Activated B cell treated with CpG ODN at 0.5 μM for 24 hours (primary cell): ENCODE measurements at regions of chr15 and their contacts with region 1.

Region 1: GRCh38 chr15:81106560-81106959 is 27.5 kb upstream of the CFAP161 start:
- DNase-seq: peak; percentile 19
- ATAC-seq: no peak
- H3K4me3 Mint-ChIP-seq: no peak overlapping the region
- H3K27ac Mint-ChIP-seq: no peak overlapping the region
- H3K4me1 Mint-ChIP-seq: peaks cover 7% of the 10 kb centered on the region
- H3K27me3 Mint-ChIP-seq: peaks cover 21% of the 10 kb centered on the region
- CTCF ChIP-seq: no peak

Region 2: DNA sequence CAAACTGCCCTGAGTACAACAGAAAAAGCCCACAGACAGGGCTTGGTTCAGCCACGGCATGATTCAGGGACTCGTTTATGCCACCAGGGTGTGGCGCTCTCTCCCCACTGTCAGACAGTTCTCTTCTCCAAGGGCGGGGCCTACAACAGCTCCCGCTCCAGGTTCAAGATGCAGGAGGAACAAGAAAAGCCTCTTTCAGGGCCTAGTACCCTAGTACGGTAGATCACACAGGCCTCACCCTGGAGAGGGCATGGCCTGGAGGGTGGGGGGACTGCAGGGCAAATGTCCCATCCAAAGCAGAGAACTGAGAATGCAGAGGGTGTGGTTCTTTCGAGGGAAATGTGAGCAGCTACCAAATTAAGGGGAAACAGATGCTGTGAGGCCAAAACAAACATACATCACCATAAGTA is 128.9 kb before region 1 on chr15:
- CTCF ChIA-PET with region 1: no interaction called
- POLR2A ChIA-PET with region 1: no interaction called
- intact Hi-C with region 1: loop called (anchors 1 kb)
- DNase-seq: peak; percentile 22
- ATAC-seq: peak; percentile 65
- H3K4me3 Mint-ChIP-seq: no peak overlapping the region
- H3K27ac Mint-ChIP-seq: peak overlapping the region; percentile 51
- H3K4me1 Mint-ChIP-seq: peaks cover 29% of the 10 kb centered on the region
- H3K27me3 Mint-ChIP-seq: no peaks in the 10 kb centered on the region
- CTCF ChIP-seq: no peak

Region 3: GRCh38 chr15:81000624-81001151 is 105.9 kb before region 1 on chr15 and contains the start of gene TLNRD1:
- CTCF ChIA-PET with region 1: interaction called, 4 read pairs
- POLR2A ChIA-PET with region 1: no interaction called
- intact Hi-C with region 1: loop called (anchors 2 kb)
- DNase-seq: peak; percentile 80
- ATAC-seq: peak; percentile 65
- H3K4me3 Mint-ChIP-seq: peak within 1 kb of the TSS; percentile 94
- H3K27ac Mint-ChIP-seq: peak within 1 kb of the TSS; percentile 96
- H3K4me1 Mint-ChIP-seq: peaks cover 47% of the 10 kb centered on the region
- H3K27me3 Mint-ChIP-seq: no peaks in the 10 kb centered on the region
- CTCF ChIP-seq: no peak
- total RNA-seq, gene TLNRD1: 25.7 TPM in 2 replicates

Region 4: GRCh38 chr15:81155375-81156218 is 49.0 kb after region 1 on chr15:
- CTCF ChIA-PET with region 1: interaction called, 5 read pairs
- POLR2A ChIA-PET with region 1: no interaction called
- intact Hi-C with region 1: loop called (anchors 1 kb)
- DNase-seq: no peak
- ATAC-seq: peak; percentile 31
- H3K4me3 Mint-ChIP-seq: no peak overlapping the region
- H3K27ac Mint-ChIP-seq: no peak overlapping the region
- H3K4me1 Mint-ChIP-seq: peaks cover 3% of the 10 kb centered on the region
- H3K27me3 Mint-ChIP-seq: peaks cover 4% of the 10 kb centered on the region
- CTCF ChIP-seq: no peak

Region 5: GRCh38 chr15:81317642-81318017 is 211.1 kb after region 1 on chr15:
- CTCF ChIA-PET with region 1: no interaction called
- POLR2A ChIA-PET with region 1: no interaction called
- intact Hi-C with region 1: no loop called
- DNase-seq: no peak
- ATAC-seq: no peak
- H3K4me3 Mint-ChIP-seq: peak overlapping the region; percentile 36
- H3K27ac Mint-ChIP-seq: peak overlapping the region; percentile 82
- H3K4me1 Mint-ChIP-seq: peaks cover 81% of the 10 kb centered on the region
- H3K27me3 Mint-ChIP-seq: no peaks in the 10 kb centered on the region
- CTCF ChIP-seq: no peak

Region 6: DNA sequence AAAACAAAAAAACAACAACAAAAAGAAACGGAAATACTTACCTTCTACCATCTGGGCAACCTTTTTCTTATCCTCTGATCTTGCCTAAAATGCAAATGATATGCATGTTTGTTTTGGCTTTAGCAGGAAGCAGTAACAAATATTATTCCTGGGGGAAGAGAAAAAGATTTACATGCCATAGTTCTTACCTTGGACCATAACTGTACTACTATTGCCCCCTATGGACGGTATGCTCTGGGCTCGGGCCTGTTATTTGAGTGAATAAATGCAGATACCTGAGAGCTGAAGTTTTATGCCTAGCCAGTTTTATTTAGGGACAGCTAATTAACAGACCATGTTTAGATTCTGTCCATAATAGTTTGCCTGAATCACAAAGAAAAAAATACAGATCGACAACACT is 230.0 kb after region 1 on chr15:
- CTCF ChIA-PET with region 1: interaction called, 4 read pairs
- POLR2A ChIA-PET with region 1: no interaction called
- intact Hi-C with region 1: loop called (anchors 1 kb)
- DNase-seq: no peak
- ATAC-seq: peak; percentile 61
- H3K4me3 Mint-ChIP-seq: no peak overlapping the region
- H3K27ac Mint-ChIP-seq: no peak overlapping the region
- H3K4me1 Mint-ChIP-seq: peaks cover 12% of the 10 kb centered on the region
- H3K27me3 Mint-ChIP-seq: no peaks in the 10 kb centered on the region
- CTCF ChIP-seq: no peak

Region 7: DNA sequence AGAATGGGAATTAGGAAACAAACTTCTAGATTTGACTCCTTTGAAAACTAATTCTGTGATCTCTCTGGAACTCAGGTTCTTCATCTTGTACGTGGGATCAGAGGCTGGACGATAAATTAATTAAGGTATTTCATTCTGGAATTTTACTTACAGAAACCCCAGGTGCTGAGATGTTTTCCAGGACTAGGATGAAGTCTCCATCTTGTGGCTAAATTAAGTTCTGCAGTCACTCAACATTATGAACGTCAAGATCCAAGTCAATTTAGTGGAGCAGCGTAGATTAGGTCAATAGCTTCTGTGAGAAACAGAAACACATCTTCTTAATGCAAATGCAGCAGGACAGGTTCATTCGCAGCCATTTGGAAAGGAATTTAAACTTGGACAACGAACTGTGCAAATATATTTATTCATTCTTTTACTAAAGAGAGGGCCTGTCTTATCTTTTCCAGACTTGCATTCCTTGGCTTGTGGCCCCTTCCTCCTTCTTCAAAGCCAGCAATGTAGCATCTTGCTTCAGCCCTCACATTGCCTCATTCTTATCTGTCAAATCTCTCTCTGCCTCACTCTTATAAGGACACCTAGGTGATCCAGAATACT is 294.2 kb after region 1 on chr15:
- CTCF ChIA-PET with region 1: interaction called, 7 read pairs
- POLR2A ChIA-PET with region 1: no interaction called
- intact Hi-C with region 1: loop called (anchors 1 kb)
- DNase-seq: no peak
- ATAC-seq: peak; percentile 58
- H3K4me3 Mint-ChIP-seq: no peak overlapping the region
- H3K27ac Mint-ChIP-seq: no peak overlapping the region
- H3K4me1 Mint-ChIP-seq: no peaks in the 10 kb centered on the region
- H3K27me3 Mint-ChIP-seq: no peaks in the 10 kb centered on the region
- CTCF ChIP-seq: peak; percentile 31

Region 8: GRCh38 chr15:81666839-81667238 is 560.3 kb after region 1 on chr15:
- CTCF ChIA-PET with region 1: no interaction called
- POLR2A ChIA-PET with region 1: no interaction called
- intact Hi-C with region 1: no loop called
- DNase-seq: no peak
- ATAC-seq: no peak
- H3K4me3 Mint-ChIP-seq: no peak overlapping the region
- H3K27ac Mint-ChIP-seq: no peak overlapping the region
- H3K4me1 Mint-ChIP-seq: peaks cover 2% of the 10 kb centered on the region
- H3K27me3 Mint-ChIP-seq: no peaks in the 10 kb centered on the region
- CTCF ChIP-seq: no peak